A673 (cell line): ENCODE measurements at regions of chr14 and their contacts with region 1.

Region 1: GRCh38 chr14:104768437-104769323 is 15.7 kb downstream of the SIVA1 start:
- DNase-seq: peak; percentile 87
- H3K4me3 ChIP-seq: no peak overlapping the region
- H3K27ac ChIP-seq: peak overlapping the region; percentile 40
- H3K4me1 ChIP-seq: peaks cover 5% of the 10 kb centered on the region
- H3K27me3 ChIP-seq: no peaks in the 10 kb centered on the region
- CTCF ChIP-seq: peak; percentile 86

Region 2: GRCh38 chr14:104387022-104388010 is 381.4 kb before region 1 on chr14:
- CTCF ChIA-PET with region 1: no interaction called
- POLR2A ChIA-PET with region 1: no interaction called
- intact Hi-C with region 1: no loop called
- DNase-seq: no peak
- H3K4me3 ChIP-seq: no peak overlapping the region
- H3K27ac ChIP-seq: no peak overlapping the region
- H3K4me1 ChIP-seq: peaks cover 5% of the 10 kb centered on the region
- H3K27me3 ChIP-seq: no peaks in the 10 kb centered on the region
- CTCF ChIP-seq: no peak

Region 3: DNA sequence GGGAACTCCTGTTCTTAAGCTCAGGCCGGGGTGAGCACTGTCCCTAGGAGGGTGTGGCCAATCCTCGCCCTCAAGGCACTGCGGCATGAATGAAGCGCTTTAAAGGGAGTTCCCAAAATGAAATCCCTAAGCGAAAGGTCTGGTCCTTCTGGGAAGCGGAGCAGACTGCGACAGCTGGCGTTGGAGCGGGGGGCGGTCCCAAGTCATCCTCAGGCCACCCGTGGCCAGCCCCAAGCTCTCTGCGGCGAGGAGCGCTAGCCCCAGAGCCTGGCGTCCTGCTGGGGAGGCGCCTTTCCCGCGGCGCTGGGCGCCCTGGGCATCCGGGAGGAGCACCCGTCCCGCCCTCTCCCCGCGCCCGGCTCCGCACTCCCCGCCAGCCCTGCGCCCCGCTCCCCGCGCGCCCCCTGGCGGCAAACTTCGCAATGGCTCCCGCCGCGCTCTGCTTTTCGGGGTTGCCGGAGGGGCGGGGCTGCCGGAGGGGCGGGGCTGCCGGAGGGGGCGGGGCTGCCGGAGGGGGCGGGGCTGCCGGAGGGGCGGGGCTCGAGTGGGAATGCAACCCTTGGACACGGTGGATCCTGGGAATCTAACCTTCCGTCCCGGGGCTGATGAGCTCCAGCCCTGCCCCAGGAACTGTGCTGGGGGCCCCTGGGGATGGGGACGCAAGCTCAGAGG is 57.6 kb after region 1 on chr14:
- CTCF ChIA-PET with region 1: interaction called, 4 read pairs
- POLR2A ChIA-PET with region 1: no interaction called
- intact Hi-C with region 1: loop called (anchors 2 kb)
- DNase-seq: peak; percentile 90
- H3K4me3 ChIP-seq: peak overlapping the region; percentile 55
- H3K27ac ChIP-seq: no peak overlapping the region
- H3K4me1 ChIP-seq: peaks cover 7% of the 10 kb centered on the region
- H3K27me3 ChIP-seq: no peaks in the 10 kb centered on the region
- CTCF ChIP-seq: peak; percentile 56

Region 4: DNA sequence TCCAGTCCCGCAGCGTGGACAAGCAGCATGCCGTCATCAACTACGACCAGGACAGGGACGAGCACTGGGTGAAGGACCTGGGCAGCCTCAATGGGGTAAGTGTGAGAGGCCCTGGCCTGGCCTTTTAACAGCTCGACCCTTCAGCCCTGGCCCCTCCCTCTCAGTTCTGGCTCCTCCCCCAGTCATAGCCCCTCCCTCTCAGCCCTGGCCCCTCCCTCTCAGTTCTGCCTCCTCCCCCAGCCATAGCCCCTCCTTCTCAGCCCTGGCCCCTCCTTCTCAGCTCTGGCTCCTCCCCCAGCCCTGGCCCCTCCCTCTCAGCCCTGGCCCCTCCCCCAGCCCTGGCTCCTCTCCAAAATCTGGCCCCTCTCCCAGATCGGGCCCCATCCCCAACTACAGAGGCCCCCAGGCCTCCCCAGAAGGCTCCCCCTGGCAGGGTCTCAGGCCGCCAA is 107.6 kb after region 1 on chr14:
- CTCF ChIA-PET with region 1: no interaction called
- POLR2A ChIA-PET with region 1: no interaction called
- intact Hi-C with region 1: no loop called
- DNase-seq: no peak
- H3K4me3 ChIP-seq: no peak overlapping the region
- H3K27ac ChIP-seq: no peak overlapping the region
- H3K4me1 ChIP-seq: no peaks in the 10 kb centered on the region
- H3K27me3 ChIP-seq: no peaks in the 10 kb centered on the region
- CTCF ChIP-seq: no peak